Activated naive CD4-positive, alpha-beta T cell treated with anti-CD3 and anti-CD28 coated beads for 36 hours (primary cell): ENCODE measurements at regions of chr9 and their contacts with region 1.

Region 1: DNA sequence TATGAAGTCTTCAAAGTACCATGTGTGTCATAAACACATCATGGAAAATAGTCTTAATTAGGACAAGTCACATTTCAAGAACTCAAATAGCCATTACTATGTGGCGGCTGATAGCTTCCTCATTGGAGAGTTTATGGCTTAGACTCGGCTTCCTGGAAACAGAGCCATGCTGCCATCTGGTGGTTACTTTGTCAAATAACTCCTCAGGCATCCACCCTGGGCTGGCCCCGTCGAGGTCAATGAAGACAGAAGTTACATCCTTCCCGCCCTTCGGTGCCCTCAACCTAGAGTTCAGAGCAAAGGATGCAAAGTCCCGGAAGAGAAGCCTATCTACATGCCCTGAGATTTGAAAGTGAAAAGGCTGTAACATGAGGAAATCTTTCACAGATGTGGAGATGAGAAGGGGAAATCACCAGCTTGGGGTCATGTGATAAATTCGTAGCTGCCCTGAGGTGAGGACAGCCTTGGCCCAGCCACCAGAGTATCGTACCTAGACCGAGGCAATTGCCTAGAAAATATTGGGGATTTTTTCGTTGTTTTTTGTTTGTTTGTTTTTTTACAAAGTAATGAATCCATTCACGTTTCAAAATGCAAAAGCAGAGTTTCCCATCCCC is 45.5 kb upstream of the ZNF169 start:
- DNase-seq: peak; percentile 83
- H3K4me3 Mint-ChIP-seq: no peak overlapping the region
- H3K27ac Mint-ChIP-seq: no peak overlapping the region
- H3K4me1 Mint-ChIP-seq: peaks cover 3% of the 10 kb centered on the region
- H3K27me3 Mint-ChIP-seq: peaks cover 27% of the 10 kb centered on the region

Region 2: GRCh38 chr9:94065535-94065961 is 148.1 kb before region 1 on chr9:
- CTCF ChIA-PET with region 1: interaction called, 156 read pairs
- intact Hi-C with region 1: loop called (anchors 1 kb)
- DNase-seq: peak; percentile 86
- H3K4me3 Mint-ChIP-seq: no peak overlapping the region
- H3K27ac Mint-ChIP-seq: no peak overlapping the region
- H3K4me1 Mint-ChIP-seq: no peaks in the 10 kb centered on the region
- H3K27me3 Mint-ChIP-seq: no peaks in the 10 kb centered on the region